AG04449 (cell line): ENCODE measurements at regions of chr2 and their contacts with region 1.

Region 1: GRCh38 chr2:88590998-88591613 is 36.2 kb downstream of the EIF2AK3 start:
- DNase-seq: peak; percentile 17
- H3K4me3 ChIP-seq: no peak overlapping the region
- CTCF ChIP-seq: peak; percentile 69

Region 2: GRCh38 chr2:88574445-88574844 is 16.7 kb before region 1 on chr2:
- CTCF ChIA-PET with region 1: interaction called, 13 read pairs
- POLR2A ChIA-PET with region 1: no interaction called
- DNase-seq: no peak
- H3K4me3 ChIP-seq: no peak overlapping the region
- CTCF ChIP-seq: no peak

Region 3: GRCh38 chr2:88615822-88616221 is 24.7 kb after region 1 on chr2:
- CTCF ChIA-PET with region 1: interaction called, 14 read pairs
- POLR2A ChIA-PET with region 1: no interaction called
- DNase-seq: no peak
- H3K4me3 ChIP-seq: no peak overlapping the region
- CTCF ChIP-seq: no peak

Region 4: GRCh38 chr2:88680266-88680902 is 89.3 kb after region 1 on chr2:
- CTCF ChIA-PET with region 1: interaction called, 692 read pairs
- POLR2A ChIA-PET with region 1: no interaction called
- DNase-seq: no peak
- H3K4me3 ChIP-seq: no peak overlapping the region
- CTCF ChIP-seq: no peak